WTC11 (cell line): ENCODE measurements at regions of chr19 and their contacts with region 1.

Region 1: GRCh38 chr19:662962-663681 is at the start of gene RNF126:
- DNase-seq: peak; percentile 88
- ATAC-seq: peak; percentile 80
- H3K4me3 Mint-ChIP-seq: peak within 1 kb of the TSS; percentile 82
- H3K27ac Mint-ChIP-seq: peak within 1 kb of the TSS; percentile 86
- H3K4me1 Mint-ChIP-seq: peaks cover 20% of the 10 kb centered on the region
- H3K27me3 Mint-ChIP-seq: peaks cover 21% of the 10 kb centered on the region
- CTCF ChIP-seq: no peak
- total RNA-seq, gene RNF126: 66.7 to 84.4 TPM (median 68.1 TPM) in 3 replicates

Region 2: DNA sequence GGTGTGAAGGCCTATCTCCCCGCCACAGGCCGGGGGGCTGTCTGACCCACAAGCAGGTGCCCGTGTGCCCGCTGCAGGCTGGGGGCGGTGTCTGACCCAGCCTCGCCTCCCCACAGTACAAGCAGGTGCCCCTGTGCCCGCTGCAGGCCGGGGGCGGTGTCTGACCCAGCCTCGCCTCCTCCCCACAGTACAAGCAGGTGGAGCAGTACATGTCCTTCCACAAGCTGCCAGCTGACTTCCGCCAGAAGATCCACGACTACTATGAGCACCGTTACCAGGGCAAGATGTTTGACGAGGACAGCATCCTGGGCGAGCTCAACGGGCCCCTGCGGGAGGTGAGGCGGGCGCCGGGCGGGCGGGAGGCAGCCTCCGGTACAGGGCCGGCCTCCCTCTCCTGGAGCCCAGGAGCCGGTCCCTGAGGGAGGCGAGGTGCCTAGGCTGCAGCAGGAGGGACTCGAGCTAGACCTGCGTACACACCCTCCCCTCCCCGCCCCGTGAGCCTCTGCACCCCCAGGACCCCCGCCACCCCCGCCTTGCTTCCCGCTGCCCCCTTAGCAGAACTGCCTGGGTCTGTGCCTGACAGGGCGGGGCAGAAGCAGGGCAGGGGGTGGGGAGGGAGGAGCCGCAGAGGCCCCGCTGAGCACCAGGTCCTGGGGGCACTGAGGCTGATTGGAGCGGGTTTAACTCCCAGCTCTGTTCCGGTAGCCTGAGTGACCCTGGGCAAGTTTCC is 52.9 kb before region 1 on chr19:
- CTCF ChIA-PET with region 1: no interaction called
- POLR2A ChIA-PET with region 1: no interaction called
- DNase-seq: no peak
- ATAC-seq: no peak
- H3K4me3 Mint-ChIP-seq: no peak overlapping the region
- H3K27ac Mint-ChIP-seq: no peak overlapping the region
- H3K4me1 Mint-ChIP-seq: peaks cover 3% of the 10 kb centered on the region; the same call in 1 of the 2 replicates
- H3K27me3 Mint-ChIP-seq: no peaks in the 10 kb centered on the region
- CTCF ChIP-seq: no peak

Region 3: DNA sequence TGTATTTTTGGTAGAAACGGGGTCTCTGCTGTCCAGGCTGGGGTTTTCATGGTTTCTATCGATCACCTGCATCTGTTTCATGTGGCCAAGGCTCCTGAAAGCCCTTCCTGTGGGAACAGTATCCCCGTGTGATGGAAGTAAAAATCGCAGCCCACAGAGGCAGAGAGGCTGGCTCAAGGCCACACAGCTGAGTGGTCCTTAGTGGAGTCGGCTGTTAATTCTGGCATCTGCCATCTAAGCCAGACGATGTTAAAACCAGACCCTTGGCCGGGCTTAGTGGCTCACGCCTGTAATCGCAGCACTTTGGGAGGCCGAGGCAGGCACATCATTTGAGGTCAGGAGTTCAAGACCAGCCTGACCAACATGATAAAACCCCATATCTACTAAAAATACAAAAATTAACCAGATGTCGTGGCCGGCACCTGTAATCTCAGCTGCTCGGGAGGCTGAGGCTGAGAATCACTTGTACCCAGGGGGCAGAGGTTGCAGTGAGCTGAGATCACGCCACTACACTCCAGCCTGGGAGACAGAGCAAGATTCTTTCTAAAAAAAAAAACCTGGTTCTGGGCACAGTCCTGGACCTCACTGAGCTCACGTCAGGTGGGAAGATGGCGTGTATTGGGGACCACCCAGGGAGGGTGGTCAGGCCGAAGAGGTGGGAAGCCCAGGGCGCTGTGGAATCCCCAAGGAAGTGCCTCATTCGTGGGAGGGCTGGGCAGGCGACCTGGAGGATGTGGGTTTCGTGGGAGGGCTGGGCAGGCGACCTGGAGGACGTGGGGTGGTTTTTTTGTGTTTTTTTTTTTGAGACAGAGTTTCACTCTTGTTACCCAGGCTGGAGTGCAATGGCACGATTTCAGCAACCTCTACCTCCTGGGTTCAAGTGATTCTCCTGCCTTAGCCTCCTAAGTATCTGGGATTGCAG is 69.3 kb after region 1 on chr19:
- CTCF ChIA-PET with region 1: interaction called, 26 read pairs
- POLR2A ChIA-PET with region 1: no interaction called
- DNase-seq: no peak
- ATAC-seq: no peak
- H3K4me3 Mint-ChIP-seq: no peak overlapping the region
- H3K27ac Mint-ChIP-seq: no peak overlapping the region
- H3K4me1 Mint-ChIP-seq: no peaks in the 10 kb centered on the region
- H3K27me3 Mint-ChIP-seq: no peaks in the 10 kb centered on the region
- CTCF ChIP-seq: no peak